Upper lobe of right lung (tissue), 1 donor: ENCODE measurements at regions of chr21 and their contacts with region 1.

Region 1: GRCh38 chr21:44801468-44802395 is at the start of gene UBE2G2:
- DNase-seq: peak; percentile 93
- ATAC-seq: peak; percentile 98
- H3K4me3 ChIP-seq: peak within 1 kb of the TSS; percentile 97
- H3K27ac ChIP-seq: peak within 1 kb of the TSS; percentile 84
- H3K4me1 ChIP-seq: peaks cover 18% of the 10 kb centered on the region
- H3K27me3 ChIP-seq: no peaks in the 10 kb centered on the region
- CTCF ChIP-seq: no peak
- total RNA-seq, gene UBE2G2: 78.8 TPM

Region 2: GRCh38 chr21:44854664-44855446 is 53.1 kb after region 1 on chr21:
- intact Hi-C with region 1: loop called (anchors 10 kb)
- DNase-seq: peak; percentile 60
- ATAC-seq: no peak
- H3K4me3 ChIP-seq: no peak overlapping the region
- H3K27ac ChIP-seq: no peak overlapping the region
- H3K4me1 ChIP-seq: peaks cover 4% of the 10 kb centered on the region
- H3K27me3 ChIP-seq: no peaks in the 10 kb centered on the region
- CTCF ChIP-seq: no peak

Region 3: GRCh38 chr21:44939532-44940115 is 137.9 kb after region 1 on chr21 and contains the start of gene SLX9:
- intact Hi-C with region 1: loop called (anchors 10 kb)
- DNase-seq: peak; percentile 91
- ATAC-seq: peak; percentile 96
- H3K4me3 ChIP-seq: peak within 1 kb of the TSS; percentile 98
- H3K27ac ChIP-seq: peak within 1 kb of the TSS; percentile 70
- H3K4me1 ChIP-seq: peaks cover 15% of the 10 kb centered on the region
- H3K27me3 ChIP-seq: no peaks in the 10 kb centered on the region
- CTCF ChIP-seq: no peak
- total RNA-seq, gene SLX9: 22.8 TPM

Region 4: GRCh38 chr21:45655124-45655523 is 853.4 kb after region 1 on chr21:
- intact Hi-C with region 1: no loop called
- DNase-seq: no peak
- ATAC-seq: no peak
- H3K4me3 ChIP-seq: no peak overlapping the region
- H3K27ac ChIP-seq: no peak overlapping the region
- H3K4me1 ChIP-seq: no peaks in the 10 kb centered on the region
- H3K27me3 ChIP-seq: no peaks in the 10 kb centered on the region
- CTCF ChIP-seq: no peak